ENCODE measurements at regions of chr5 and their contacts with region 1.

Region 1: DNA sequence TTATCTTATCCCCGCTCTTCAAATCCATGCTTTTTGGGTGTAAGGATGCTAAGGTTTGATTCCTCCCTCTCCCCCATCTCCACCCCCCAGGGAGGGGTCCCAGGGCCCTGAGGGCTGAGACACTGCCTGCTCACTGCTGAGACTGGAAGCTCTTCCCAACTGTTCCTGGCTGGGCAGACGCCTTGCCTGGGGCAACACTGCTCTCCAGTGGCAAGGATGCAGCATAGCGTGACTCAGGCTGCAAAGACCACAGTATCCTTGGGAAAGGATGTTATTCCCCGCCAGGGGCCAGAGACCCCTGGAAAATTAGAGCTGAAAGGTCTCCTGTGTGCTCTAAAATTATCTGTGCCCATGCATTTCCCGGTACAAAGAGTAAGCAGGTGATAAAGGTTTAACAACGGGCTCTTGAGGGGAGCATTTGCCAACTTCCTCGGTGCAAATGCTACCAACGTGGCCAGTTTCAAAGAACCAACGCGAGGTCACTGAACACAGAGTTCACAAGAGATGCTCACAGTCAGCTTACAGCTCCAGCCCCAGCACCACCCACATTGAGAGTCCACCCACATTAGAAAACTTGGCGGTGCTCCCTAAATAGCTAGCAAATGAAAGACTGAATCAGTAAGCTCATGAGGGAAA is 271.9 kb downstream of the NSG2 start:
- DNase-seq: peak in 1 of 2 experiments; percentile 48
- H3K4me3 ChIP-seq: no peak overlapping the region
- H3K27ac ChIP-seq: no peak overlapping the region
- H3K4me1 ChIP-seq: no peaks in the 10 kb centered on the region
- H3K27me3 ChIP-seq: peaks cover 77% of the 10 kb centered on the region
- CTCF ChIP-seq: peak; percentile 78

Region 2: GRCh38 chr5:172707285-172708182 is 1609.8 kb before region 1 on chr5:
- CTCF ChIA-PET with region 1: no interaction called
- POLR2A ChIA-PET with region 1: no interaction called
- intact Hi-C with region 1: loop called (anchors 1 kb)
- DNase-seq: peak in 1 of 2 experiments; percentile 69
- H3K4me3 ChIP-seq: no peak overlapping the region
- H3K27ac ChIP-seq: no peak overlapping the region
- H3K4me1 ChIP-seq: no peaks in the 10 kb centered on the region; the same call in 1 of the 2 replicates
- H3K27me3 ChIP-seq: no peaks in the 10 kb centered on the region
- CTCF ChIP-seq: peak; percentile 74

Region 3: DNA sequence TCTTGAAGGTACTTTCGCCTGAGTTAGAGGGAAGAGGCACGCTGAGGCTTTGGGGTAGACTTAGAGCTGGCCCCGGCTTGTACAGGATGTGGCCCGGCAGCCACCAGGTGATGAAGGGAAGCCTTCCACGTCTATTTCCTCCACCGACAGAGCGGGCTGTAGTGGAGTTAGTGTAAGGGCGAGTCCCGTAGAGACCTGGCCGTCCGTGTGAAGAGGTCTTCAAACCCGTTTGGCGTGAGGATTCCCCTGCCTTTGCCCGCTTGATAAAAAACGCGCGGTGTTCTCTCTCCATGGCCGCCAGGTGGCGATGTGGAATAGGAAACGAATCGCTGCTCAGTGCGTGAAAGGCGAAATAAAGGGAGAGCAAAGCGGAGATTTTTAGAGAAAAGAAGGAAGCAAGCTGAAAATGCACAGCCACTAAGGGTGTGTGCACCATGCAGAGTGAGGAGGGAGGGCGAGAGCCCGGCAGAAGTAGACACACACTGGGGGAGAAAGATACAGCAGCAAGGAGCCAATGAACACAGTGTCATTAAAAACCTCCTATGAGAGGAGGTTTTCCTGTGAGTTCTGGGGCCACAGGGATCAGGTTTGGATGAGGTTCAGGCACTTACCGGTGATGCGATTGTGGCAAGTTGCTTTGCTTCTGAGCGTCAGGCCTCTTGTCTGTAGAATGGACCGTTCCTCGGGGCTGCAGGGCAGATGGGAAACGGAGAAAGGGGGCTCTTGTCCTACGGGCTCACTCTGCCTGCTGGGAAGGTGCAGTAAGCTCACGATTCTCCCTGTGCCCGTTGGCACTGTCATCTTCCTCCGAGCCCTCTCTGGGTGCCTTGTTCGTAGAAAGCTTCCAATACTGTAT is 1023.3 kb before region 1 on chr5:
- CTCF ChIA-PET with region 1: interaction called, 4 read pairs
- POLR2A ChIA-PET with region 1: no interaction called
- intact Hi-C with region 1: loop called (anchors 1 kb)
- DNase-seq: peak; percentile 71 to 83
- H3K4me3 ChIP-seq: peak overlapping the region; percentile 45; the same call in 1 of the 2 replicates
- H3K27ac ChIP-seq: peak overlapping the region; percentile 28
- H3K4me1 ChIP-seq: peaks cover 26% of the 10 kb centered on the region
- H3K27me3 ChIP-seq: no peaks in the 10 kb centered on the region
- CTCF ChIP-seq: peak; percentile 92

Region 4: GRCh38 chr5:173969167-173970049 is 348.0 kb before region 1 on chr5:
- CTCF ChIA-PET with region 1: no interaction called
- POLR2A ChIA-PET with region 1: no interaction called
- intact Hi-C with region 1: no loop called
- DNase-seq: peak; percentile 23 to 97
- H3K4me3 ChIP-seq: no peak overlapping the region
- H3K27ac ChIP-seq: peak overlapping the region; percentile 61
- H3K4me1 ChIP-seq: peaks cover 37% of the 10 kb centered on the region
- H3K27me3 ChIP-seq: no peaks in the 10 kb centered on the region
- CTCF ChIP-seq: no peak